Caco-2 (cell line): ENCODE measurements at regions of chr7 and their contacts with region 1.

Region 1: GRCh38 chr7:47266131-47266706 is 315.7 kb downstream of the TNS3 start:
- DNase-seq: peak; percentile 82 to 85
- H3K4me3 ChIP-seq: no peak overlapping the region
- H3K4me3 Mint-ChIP-seq: no peak overlapping the region
- H3K27ac Mint-ChIP-seq: peak overlapping the region; percentile 31
- H3K4me1 ChIP-seq: peaks cover 25% of the 10 kb centered on the region
- H3K4me1 Mint-ChIP-seq: peaks cover 17% of the 10 kb centered on the region
- H3K27me3 ChIP-seq: no peaks in the 10 kb centered on the region
- H3K27me3 Mint-ChIP-seq: no peaks in the 10 kb centered on the region
- CTCF ChIP-seq: peak; percentile 89 to 96

Region 2: DNA sequence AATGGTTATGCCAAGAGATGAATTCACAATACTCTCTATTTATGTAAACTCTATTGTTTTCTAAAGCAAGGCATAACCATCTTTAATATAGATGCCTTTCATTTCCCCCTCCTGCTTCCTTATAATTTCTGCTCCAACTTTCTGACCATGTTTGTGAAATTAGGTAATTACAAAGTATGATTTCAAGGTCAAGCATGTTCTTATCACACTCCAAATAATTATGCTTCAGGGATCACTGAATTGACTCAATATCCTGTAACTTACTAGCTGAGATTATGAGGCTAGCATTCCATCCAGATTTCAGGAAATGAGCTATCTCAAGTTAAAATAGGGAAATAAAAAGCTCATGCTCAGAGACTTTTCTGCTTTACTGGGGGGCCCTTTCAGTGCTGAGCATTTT is 689.3 kb before region 1 on chr7:
- CTCF ChIA-PET with region 1: no interaction called
- POLR2A ChIA-PET with region 1: no interaction called
- intact Hi-C with region 1: no loop called
- DNase-seq: no peak
- H3K4me3 ChIP-seq: no peak overlapping the region
- H3K4me3 Mint-ChIP-seq: no peak overlapping the region
- H3K27ac Mint-ChIP-seq: no peak overlapping the region
- H3K4me1 ChIP-seq: no peaks in the 10 kb centered on the region
- H3K4me1 Mint-ChIP-seq: no peaks in the 10 kb centered on the region
- H3K27me3 ChIP-seq: no peaks in the 10 kb centered on the region
- H3K27me3 Mint-ChIP-seq: peaks cover under 1% of the 10 kb centered on the region
- CTCF ChIP-seq: no peak

Region 3: DNA sequence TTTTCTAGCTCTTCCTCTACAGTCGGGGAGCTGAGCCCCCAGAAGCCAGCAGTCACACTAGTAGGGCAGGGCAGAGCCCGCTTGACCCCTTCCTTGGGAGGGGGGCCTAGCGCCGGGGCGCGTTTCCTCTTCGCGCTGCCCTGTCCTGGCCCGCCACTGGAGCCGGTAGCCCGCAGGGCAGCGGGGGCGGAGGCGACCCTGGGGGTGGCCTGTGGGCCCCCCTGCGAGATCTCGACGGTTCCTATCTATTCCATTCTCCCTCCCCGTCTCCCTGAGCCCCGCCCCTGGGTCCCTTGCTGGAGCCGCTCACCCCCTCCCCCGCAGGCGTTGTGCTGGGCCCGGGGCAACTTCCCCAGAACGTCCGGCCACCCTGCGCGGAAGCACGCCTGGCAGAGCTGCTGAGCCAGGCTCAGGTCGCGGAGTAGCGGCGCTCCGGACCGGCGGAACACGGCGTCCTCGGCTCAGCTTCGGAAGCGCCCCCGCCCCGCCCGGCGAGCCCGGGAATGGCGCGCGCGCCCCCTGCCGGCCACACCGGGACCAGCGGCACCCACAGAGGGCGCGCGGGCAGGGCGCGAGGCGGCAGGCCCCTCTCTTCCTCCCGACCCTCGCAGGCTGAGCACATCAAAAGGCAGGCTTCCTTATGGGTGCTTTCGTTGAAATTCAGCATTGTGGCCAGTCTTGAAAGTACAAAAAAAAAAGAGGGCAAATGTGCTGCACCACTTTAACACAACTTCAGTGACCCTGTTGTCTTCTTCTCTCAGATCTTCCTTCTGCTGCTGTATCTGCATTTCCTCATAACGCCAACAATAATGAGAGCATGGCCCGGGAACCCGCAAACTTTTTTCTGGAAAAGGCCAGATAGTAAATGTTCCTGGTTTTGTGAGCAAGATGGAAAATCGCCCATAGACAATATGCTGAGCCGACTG is 11.9 kb before region 1 on chr7:
- CTCF ChIA-PET with region 1: interaction called, 13 read pairs
- POLR2A ChIA-PET with region 1: no interaction called
- intact Hi-C with region 1: no loop called
- DNase-seq: peak; percentile 74 to 86
- H3K4me3 ChIP-seq: peak overlapping the region; percentile 52
- H3K4me3 Mint-ChIP-seq: peak overlapping the region; percentile 68
- H3K27ac Mint-ChIP-seq: no peak overlapping the region
- H3K4me1 ChIP-seq: no peaks in the 10 kb centered on the region; the same call in 1 of the 2 replicates
- H3K4me1 Mint-ChIP-seq: no peaks in the 10 kb centered on the region
- H3K27me3 ChIP-seq: no peaks in the 10 kb centered on the region
- H3K27me3 Mint-ChIP-seq: peaks cover 7% of the 10 kb centered on the region
- CTCF ChIP-seq: peak; percentile 53 to 94

Region 4: GRCh38 chr7:47337531-47337930 is 71.3 kb after region 1 on chr7:
- CTCF ChIA-PET with region 1: interaction called, 16 read pairs
- POLR2A ChIA-PET with region 1: no interaction called
- intact Hi-C with region 1: no loop called
- DNase-seq: peak in 1 of 2 experiments; percentile 25
- H3K4me3 ChIP-seq: no peak overlapping the region
- H3K4me3 Mint-ChIP-seq: no peak overlapping the region
- H3K27ac Mint-ChIP-seq: peak overlapping the region; percentile 45
- H3K4me1 ChIP-seq: no peaks in the 10 kb centered on the region
- H3K4me1 Mint-ChIP-seq: peaks cover 22% of the 10 kb centered on the region
- H3K27me3 ChIP-seq: no peaks in the 10 kb centered on the region
- H3K27me3 Mint-ChIP-seq: no peaks in the 10 kb centered on the region
- CTCF ChIP-seq: no peak

Region 5: GRCh38 chr7:47435889-47436312 is 169.7 kb after region 1 on chr7:
- CTCF ChIA-PET with region 1: interaction called, 16 read pairs
- POLR2A ChIA-PET with region 1: no interaction called
- intact Hi-C with region 1: no loop called
- DNase-seq: peak in 1 of 2 experiments; percentile 71
- H3K4me3 ChIP-seq: no peak overlapping the region
- H3K4me3 Mint-ChIP-seq: no peak overlapping the region
- H3K27ac Mint-ChIP-seq: peak overlapping the region; percentile 48
- H3K4me1 ChIP-seq: 0 out of 2 replicates have a peak, but pooled peaks cover 4% of the 10 kb centered on the region
- H3K4me1 Mint-ChIP-seq: peaks cover 34% of the 10 kb centered on the region
- H3K27me3 ChIP-seq: no peaks in the 10 kb centered on the region
- H3K27me3 Mint-ChIP-seq: no peaks in the 10 kb centered on the region
- CTCF ChIP-seq: peak; percentile 28 to 69

Region 6: GRCh38 chr7:47954231-47954911 is 688.2 kb after region 1 on chr7:
- CTCF ChIA-PET with region 1: interaction called, 8 read pairs
- POLR2A ChIA-PET with region 1: no interaction called
- intact Hi-C with region 1: loop called (anchors 5 kb)
- DNase-seq: no peak
- H3K4me3 ChIP-seq: no peak overlapping the region
- H3K4me3 Mint-ChIP-seq: no peak overlapping the region
- H3K27ac Mint-ChIP-seq: no peak overlapping the region
- H3K4me1 ChIP-seq: peaks cover 20% of the 10 kb centered on the region
- H3K4me1 Mint-ChIP-seq: peaks cover 26% of the 10 kb centered on the region
- H3K27me3 ChIP-seq: no peaks in the 10 kb centered on the region
- H3K27me3 Mint-ChIP-seq: no peaks in the 10 kb centered on the region
- CTCF ChIP-seq: no peak

Region 7: DNA sequence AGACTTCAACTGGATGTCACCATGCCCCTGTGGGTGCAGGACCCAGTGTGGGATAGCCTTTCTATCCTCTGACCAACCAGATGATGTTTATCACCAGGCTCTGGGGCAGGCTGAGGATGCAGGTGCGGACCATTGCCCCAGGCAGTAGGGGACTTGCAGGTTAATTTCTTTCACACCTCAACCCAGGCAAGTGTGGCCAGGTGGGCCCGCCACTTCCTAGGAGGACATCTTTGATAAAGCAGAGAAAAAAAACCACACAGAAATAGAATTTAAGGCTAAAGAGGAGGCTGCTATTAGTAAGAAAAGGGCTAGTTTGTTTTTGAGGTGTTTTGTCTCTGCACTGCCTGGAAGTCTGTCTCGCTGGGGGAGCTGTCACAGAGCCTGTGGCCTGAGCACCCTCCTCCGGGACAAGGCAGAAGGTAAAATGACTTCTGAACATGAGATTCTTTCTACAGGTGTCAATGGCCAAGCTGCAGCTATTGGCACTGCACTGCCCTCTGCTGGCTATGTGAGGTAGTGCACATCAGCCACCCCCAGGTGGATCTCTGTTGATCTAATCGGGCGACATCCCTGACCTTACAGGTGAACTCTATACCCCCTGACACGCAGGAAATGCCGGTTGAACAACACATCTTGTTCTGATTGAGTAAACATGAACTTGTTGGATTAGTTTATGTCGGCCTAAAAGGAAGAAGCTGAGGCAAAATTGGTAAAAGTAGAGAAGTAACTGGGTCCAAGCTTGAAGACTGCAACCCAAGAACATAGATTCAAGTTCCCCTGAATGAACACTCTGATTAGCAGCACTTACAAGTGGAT is 843.8 kb after region 1 on chr7:
- CTCF ChIA-PET with region 1: interaction called, 4 read pairs
- POLR2A ChIA-PET with region 1: no interaction called
- intact Hi-C with region 1: loop called (anchors 2 kb)
- DNase-seq: peak; percentile 82 to 88
- H3K4me3 ChIP-seq: no peak overlapping the region
- H3K4me3 Mint-ChIP-seq: no peak overlapping the region
- H3K27ac Mint-ChIP-seq: peak overlapping the region; percentile 13
- H3K4me1 ChIP-seq: peaks cover 9% of the 10 kb centered on the region
- H3K4me1 Mint-ChIP-seq: peaks cover 18% of the 10 kb centered on the region
- H3K27me3 ChIP-seq: no peaks in the 10 kb centered on the region
- H3K27me3 Mint-ChIP-seq: no peaks in the 10 kb centered on the region
- CTCF ChIP-seq: peak; percentile 97 to 98